Left cardiac atrium (tissue), 4 donors: ENCODE measurements at regions of chr10 and their contacts with region 1.

Region 1: DNA sequence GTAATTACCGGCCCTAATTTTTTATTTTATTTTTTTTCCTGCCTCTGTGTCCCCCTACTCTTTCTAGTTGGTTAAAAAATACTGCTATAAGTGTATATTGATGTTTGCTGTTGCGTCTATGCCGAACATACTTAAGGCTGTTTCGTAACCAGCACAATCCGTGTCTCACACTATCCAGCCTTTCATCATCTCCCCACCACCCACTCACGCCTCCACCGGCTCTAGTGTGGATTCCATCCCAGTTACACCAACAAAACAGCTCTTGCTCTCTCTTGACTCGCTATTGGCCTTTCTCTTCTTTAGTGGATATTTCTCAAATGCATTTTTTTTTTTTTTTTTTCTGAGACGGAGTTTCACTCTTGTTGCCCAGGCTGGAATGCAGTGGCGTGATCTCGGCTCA is 70.1 kb upstream of the CAMK1D start:
- DNase-seq: no peak
- ATAC-seq: peak in 1 of 2 donors; percentile 93

Region 2: DNA sequence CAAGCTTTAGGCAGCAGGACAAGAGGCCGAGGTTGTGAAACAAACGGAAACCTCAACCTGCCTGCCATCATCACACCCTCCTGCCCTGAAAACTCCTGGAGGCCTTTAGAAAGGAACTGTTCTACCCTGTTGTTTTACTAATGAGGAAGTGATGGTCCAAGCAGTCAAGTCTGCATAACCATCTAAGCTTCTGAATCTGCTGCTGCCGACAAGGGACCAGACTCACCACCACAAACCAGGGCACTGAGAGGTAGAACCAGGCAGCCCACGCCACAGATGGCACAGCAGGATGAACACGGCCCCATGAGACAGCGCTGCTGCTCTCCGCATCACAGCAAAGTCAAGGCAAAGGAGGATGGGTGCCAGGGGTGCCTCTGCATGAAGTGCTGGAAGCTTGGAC is 1052.2 kb before region 1 on chr10:
- intact Hi-C with region 1: no loop called
- DNase-seq: no peak
- ATAC-seq: no peak

Region 3: DNA sequence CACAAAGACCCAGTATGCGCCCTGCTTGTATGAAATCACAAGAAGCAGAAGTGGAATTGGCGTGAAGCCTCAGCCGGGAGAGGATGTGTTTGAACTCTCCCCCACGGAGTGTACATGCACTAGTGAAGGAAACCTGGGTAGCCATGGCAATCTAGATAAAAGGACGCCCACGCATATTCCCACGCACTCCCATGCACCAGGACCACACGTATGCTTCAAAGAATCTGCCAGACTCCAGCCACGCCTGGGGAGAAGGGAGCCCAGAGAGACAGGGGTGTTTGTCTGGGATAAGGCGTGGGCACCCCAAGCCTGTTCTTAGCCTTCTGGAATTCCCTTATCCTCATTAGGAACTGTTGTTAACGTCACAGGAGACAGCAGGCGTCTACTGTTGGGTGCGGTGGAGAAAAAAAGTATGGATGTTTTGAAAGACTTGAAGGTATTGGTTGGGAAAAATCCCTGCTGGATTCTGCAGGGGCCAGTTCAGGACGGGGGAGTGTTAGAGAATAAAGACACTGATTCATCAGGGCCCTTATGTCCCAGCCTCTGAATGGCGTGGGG is 566.0 kb before region 1 on chr10:
- intact Hi-C with region 1: no loop called
- DNase-seq: peak; percentile 56
- ATAC-seq: peak; percentile 43 to 91

Region 4: GRCh38 chr10:12228851-12229250 is 50.4 kb before region 1 on chr10:
- intact Hi-C with region 1: no loop called
- DNase-seq: no peak
- ATAC-seq: no peak

Region 5: DNA sequence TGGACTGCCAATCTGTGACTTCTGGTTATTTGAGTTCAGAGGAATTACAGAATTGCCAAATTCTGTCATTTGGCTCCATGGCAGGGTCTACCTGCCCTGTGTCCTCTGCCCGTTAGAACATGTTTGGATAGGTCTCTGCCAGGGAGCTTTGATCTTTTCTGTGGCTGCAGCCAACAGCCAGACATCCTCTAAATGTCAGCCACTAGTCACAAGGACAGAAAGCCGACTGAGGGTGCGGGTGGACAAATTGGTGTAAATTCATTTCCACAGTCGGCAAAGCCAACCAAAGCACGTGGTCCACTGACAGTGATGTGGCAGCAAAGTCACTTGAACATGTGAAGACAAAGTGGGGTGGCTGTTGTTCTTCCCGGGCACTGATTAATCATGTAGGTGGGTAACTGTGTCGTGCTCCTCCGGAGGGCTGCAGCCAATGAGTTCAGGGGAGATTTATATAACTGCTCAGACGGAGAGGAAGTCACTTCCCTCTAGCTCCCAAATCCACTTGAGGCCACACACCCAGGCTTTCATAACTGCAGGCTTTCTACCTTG is 43.4 kb after region 1 on chr10:
- intact Hi-C with region 1: loop called in 1 of 2 experiments (anchors 10 kb)
- DNase-seq: peak; percentile 21
- ATAC-seq: peak in 1 of 2 donors; percentile 34